Activated CD8-positive, alpha-beta T cell treated with anti-CD3 and anti-CD28 coated beads, Interleukin-2, amount 10 ng/mL, durations not matched to agents 7 days and 5 days (primary cell): ENCODE measurements at regions of chr10 and their contacts with region 1.

Region 1: DNA sequence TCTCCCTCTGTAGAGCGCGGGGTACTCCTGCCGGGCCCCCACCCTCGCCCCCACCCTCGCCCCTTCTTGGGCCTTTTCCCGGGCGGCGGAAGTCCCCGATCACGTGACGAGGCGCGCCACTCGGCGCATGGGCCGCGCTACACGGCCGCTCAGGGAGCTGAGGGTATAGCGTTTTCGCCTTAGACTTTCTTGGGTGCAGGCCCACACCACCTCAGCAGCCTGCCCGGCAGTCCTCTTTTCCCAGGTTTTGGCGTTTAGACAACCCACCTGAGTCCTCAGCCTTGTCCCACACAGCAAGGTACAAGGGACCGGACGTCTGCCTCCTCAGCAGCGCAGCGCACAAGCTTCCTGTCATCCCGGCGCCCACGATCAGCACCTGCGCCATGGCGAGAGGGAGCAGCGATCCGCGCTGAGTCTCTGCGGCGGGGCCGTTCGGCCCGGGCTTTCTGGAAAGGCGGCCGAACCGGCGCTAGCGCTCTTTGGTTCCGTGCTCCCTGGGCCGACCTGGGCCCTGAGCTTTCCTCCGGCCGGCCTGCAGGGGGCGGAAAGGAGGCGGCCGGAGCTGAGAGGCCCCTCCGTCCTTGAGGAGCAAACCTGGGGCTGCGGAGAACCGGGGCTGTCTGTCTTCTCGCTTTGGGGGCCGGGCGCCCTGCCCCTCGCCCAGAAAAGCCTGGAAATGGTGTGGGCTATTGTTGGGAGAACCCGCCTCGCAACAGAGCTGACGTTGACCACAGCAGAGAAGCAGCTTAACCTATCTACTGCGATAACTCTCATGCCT is at the start of gene RNLS:
- DNase-seq: peak; percentile 72
- ATAC-seq: peak; percentile 89
- H3K4me3 Mint-ChIP-seq: peak within 1 kb of the TSS; percentile 79
- H3K27ac Mint-ChIP-seq: peak within 1 kb of the TSS; percentile 88
- H3K4me1 Mint-ChIP-seq: peaks cover 14% of the 10 kb centered on the region
- H3K27me3 Mint-ChIP-seq: peaks cover 7% of the 10 kb centered on the region
- total RNA-seq, gene RNLS: 2.5 to 3.3 TPM

Region 2: GRCh38 chr10:88472540-88472939 is 110.5 kb before region 1 on chr10:
- CTCF ChIA-PET with region 1: no interaction called
- POLR2A ChIA-PET with region 1: no interaction called
- DNase-seq: no peak
- ATAC-seq: no peak
- H3K4me3 Mint-ChIP-seq: no peak overlapping the region
- H3K27ac Mint-ChIP-seq: no peak overlapping the region
- H3K4me1 Mint-ChIP-seq: no peaks in the 10 kb centered on the region
- H3K27me3 Mint-ChIP-seq: peaks cover 2% of the 10 kb centered on the region

Region 3: DNA sequence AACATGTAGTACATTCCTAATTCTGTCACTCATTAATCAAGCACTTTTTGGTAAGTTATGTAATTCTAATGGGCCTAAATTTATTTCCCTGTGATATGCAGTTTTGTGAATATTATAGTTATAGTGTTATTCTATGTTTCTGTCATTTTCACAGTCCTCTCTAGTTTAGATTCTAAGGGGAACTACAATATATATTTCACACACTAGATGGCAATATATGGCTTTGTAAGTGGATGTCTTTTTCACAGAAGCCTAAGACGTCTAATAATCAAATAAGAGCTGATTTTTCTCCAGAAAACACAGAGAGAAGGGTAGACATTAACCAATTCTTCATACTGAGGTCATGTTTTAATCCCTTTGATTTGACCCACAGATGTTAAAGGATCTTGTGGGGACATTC is 17.9 kb before region 1 on chr10:
- CTCF ChIA-PET with region 1: interaction called, 15 read pairs
- POLR2A ChIA-PET with region 1: no interaction called
- DNase-seq: no peak
- ATAC-seq: peak; percentile 47
- H3K4me3 Mint-ChIP-seq: no peak overlapping the region
- H3K27ac Mint-ChIP-seq: no peak overlapping the region
- H3K4me1 Mint-ChIP-seq: no peaks in the 10 kb centered on the region
- H3K27me3 Mint-ChIP-seq: peaks cover 13% of the 10 kb centered on the region

Region 4: DNA sequence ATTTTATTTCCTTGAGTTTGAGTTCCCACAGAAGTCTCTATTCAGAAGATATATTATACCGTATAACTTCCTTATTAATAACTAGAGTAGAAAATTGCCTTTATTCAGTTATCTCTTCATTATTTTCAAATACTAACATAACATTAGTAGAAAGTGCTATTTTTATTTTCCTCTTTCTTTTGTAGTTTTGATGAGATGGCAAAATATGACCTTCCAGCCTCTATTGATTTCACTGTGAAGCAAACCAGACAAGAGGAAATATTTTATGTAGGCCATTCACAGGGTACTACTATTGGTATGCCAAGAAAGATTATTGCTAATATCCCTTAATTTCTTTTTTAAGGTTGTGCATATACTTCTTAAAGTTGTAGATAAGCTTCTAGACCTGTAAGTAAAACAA is 11.5 kb after region 1 on chr10:
- CTCF ChIA-PET with region 1: interaction called, 10 read pairs
- POLR2A ChIA-PET with region 1: interaction called, 3 read pairs
- DNase-seq: no peak
- ATAC-seq: no peak
- H3K4me3 Mint-ChIP-seq: no peak overlapping the region
- H3K27ac Mint-ChIP-seq: no peak overlapping the region
- H3K4me1 Mint-ChIP-seq: no peaks in the 10 kb centered on the region
- H3K27me3 Mint-ChIP-seq: peaks cover 2% of the 10 kb centered on the region